ENCODE measurements at regions of chr1 and their contacts with region 1.

Region 1: DNA sequence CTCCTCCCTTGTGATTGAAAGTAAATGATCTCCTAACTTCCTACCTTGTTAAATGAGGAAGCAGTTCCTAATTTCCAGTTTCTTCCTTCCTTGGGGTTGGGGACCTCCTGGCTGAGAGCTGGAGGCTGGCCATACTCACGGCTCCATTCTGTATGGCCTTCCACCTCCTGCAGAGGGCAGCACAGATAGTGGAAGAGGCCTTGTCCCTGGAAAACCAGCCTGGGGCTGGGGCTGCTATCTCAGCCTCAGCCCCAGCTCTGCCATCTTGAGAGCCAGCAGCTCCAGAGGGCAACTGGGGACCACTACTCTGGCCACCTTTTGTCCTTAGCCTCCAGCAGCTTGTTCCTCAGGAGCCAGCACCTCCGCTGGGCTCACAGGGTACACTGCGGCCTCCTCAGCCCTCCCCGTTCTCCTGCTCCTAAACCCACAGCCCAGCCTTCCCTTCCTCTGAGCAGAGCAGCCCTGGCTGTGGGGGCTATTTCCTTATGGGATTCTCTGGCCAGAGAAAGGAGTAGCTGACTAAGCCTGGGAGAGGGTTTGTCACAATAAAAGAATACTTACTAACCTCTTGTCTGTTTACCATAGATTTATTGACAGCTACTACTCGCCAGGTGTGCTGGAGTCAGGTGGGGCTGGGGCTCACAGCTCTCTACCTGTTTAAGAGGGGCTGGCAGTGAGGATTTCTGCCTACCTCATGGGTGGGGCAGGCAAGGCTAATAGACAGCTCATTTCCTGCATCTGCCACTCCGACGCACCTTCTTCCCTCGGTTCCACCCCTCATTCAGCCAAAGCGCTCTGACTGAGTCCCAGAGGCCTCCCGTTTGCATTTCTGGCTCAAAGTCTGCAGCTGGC is 6.3 kb downstream of the TMEM234 start:
- DNase-seq: peak; percentile 60
- H3K4me3 ChIP-seq: no peak overlapping the region
- H3K27ac ChIP-seq: no peak overlapping the region
- H3K4me1 ChIP-seq: peaks cover 3% of the 10 kb centered on the region
- H3K27me3 ChIP-seq: no peaks in the 10 kb centered on the region
- CTCF ChIP-seq: peak; percentile 84 to 89
- POLR2A ChIP-seq: no peak

Region 2: DNA sequence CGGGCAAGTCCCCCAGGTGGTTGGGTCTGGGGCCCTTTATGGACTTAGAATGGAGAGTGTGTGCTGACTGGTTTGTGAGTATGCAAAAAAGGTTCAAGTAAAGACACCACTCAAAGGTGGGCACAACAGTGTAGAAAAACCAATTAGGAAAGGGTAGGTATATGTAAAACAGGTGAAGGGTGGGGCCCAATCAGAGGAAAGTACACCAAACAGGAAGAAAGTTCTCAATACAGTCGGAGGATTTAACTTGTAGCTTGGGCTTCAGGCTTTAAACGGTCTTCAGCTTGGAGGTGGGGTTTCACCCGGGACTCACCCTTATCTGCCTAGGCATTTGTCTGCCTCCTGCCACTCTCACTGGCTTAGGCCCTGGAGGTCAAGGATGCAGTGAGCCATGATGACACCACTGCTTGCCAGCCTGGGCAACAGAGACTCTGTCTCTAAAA is 1143.5 kb before region 1 on chr1:
- CTCF ChIA-PET with region 1: no interaction called
- POLR2A ChIA-PET with region 1: no interaction called
- dilution Hi-C with region 1: no loop called
- intact Hi-C with region 1: no loop called
- DNase-seq: no peak
- H3K4me3 ChIP-seq: no peak overlapping the region
- H3K27ac ChIP-seq: no peak overlapping the region
- H3K4me1 ChIP-seq: no peaks in the 10 kb centered on the region
- H3K27me3 ChIP-seq: no peaks in the 10 kb centered on the region
- CTCF ChIP-seq: no peak
- POLR2A ChIP-seq: no peak

Region 3: DNA sequence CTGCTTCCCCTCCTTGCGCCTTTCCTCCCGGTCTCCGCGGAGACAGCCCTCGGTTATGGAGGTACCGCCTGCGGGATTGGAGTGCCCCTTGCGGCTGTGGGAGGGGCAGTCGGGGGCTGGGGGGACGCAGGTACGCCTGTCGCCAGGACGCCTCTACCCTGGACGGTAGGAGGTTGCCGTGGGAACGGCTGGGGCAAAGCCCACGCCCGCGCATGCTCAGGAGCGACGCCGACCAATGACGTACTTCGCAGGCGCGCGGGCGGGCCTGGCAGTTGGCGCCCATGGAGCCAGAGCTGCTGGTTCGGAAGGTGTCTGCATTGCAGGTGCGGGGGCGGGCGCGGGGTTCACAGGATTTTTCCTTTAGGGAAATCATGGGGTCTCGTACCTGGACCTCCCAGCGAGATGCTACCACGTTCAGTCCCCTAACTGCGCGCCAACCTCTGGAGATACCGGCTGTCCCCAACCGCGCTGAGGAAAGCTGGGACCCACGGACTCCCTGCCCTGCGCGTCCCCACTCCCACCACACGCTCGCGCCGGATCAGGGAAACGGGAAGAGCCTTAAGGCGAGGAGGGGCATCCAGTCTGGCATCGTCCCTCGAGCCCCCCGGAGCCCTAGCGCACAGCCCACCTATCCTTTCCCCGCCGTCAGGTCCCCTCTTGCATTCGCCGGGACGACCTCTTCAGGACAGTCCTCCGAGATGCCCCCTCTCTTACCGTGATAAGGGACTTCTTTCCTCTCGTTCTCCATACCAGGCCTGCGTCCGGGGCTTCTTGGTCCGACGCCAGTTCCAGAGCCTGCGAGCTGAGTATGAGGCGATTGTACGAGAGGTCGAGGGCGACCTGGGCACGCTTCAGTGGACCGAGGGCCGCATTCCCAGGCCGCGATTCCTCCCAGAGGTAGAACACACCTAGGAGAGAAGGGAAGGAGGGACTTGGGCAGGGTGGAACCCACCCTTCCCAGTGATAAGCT is 10.2 kb before region 1 on chr1 and contains the start of gene IQCC:
- CTCF ChIA-PET with region 1: interaction called, 25 read pairs
- POLR2A ChIA-PET with region 1: no interaction called
- dilution Hi-C with region 1: no loop called
- intact Hi-C with region 1: no loop called
- DNase-seq: peak; percentile 82
- H3K4me3 ChIP-seq: peak within 1 kb of the TSS; percentile 53 to 68 (median 68)
- H3K27ac ChIP-seq: peak within 1 kb of the TSS; percentile 19
- H3K4me1 ChIP-seq: peaks cover 27% of the 10 kb centered on the region
- H3K27me3 ChIP-seq: no peaks in the 10 kb centered on the region
- CTCF ChIP-seq: no peak
- POLR2A ChIP-seq: peak; percentile 86
- total RNA-seq, gene IQCC: 1.8 and 2.2 TPM in 2 replicates

Region 4: GRCh38 chr1:32240140-32240951 is 24.5 kb after region 1 on chr1:
- CTCF ChIA-PET with region 1: interaction called, 30 read pairs
- POLR2A ChIA-PET with region 1: no interaction called
- dilution Hi-C with region 1: no loop called
- intact Hi-C with region 1: no loop called
- DNase-seq: peak; percentile 35
- H3K4me3 ChIP-seq: peak overlapping the region; percentile 50 to 81 (median 76)
- H3K27ac ChIP-seq: peak overlapping the region; percentile 70
- H3K4me1 ChIP-seq: peaks cover 32% of the 10 kb centered on the region
- H3K27me3 ChIP-seq: no peaks in the 10 kb centered on the region
- CTCF ChIP-seq: peak in 1 of 2 donors; percentile 36
- POLR2A ChIP-seq: peak; percentile 58

Region 5: DNA sequence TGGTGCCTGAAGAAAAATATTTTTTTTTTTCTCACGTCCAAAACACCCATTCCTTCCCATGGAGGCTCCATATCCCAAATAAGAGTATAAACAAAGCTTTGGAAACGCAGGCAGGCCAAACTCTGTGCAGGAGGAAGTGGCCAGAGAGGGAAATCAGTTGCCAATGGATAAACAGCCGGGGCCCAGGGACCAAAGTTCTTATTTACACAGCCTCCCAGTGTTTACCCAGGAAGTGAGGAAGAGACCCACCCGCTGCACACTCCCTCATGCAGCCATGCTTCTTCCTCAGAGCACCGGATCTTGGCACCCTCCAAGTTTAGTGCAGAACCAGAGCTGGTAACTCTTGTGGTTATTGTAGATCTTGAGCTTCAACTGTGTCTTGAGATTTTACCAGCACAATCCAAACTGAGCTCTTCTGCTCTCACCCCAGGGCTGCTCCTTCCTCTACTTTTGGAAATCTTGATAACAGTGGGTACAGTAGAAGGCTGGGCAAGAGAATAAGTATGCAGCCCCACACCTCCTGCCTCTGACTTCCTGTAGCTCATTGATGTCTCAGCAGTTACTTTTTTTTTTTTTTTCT is 105.9 kb after region 1 on chr1:
- CTCF ChIA-PET with region 1: interaction called, 78 read pairs
- POLR2A ChIA-PET with region 1: no interaction called
- dilution Hi-C with region 1: no loop called
- intact Hi-C with region 1: no loop called
- DNase-seq: no peak
- H3K4me3 ChIP-seq: no peak overlapping the region
- H3K27ac ChIP-seq: no peak overlapping the region
- H3K4me1 ChIP-seq: peaks cover 6% of the 10 kb centered on the region
- H3K27me3 ChIP-seq: no peaks in the 10 kb centered on the region
- CTCF ChIP-seq: no peak
- POLR2A ChIP-seq: no peak

Region 6: GRCh38 chr1:32361674-32362473 is 146.0 kb after region 1 on chr1:
- CTCF ChIA-PET with region 1: interaction called, 16 read pairs
- POLR2A ChIA-PET with region 1: no interaction called
- dilution Hi-C with region 1: no loop called
- intact Hi-C with region 1: loop called (anchors 5 kb)
- DNase-seq: peak; percentile 41
- H3K4me3 ChIP-seq: peak overlapping the region in 2 of 3 experiments; percentile 14 to 31
- H3K27ac ChIP-seq: no peak overlapping the region
- H3K4me1 ChIP-seq: peaks cover 7% of the 10 kb centered on the region
- H3K27me3 ChIP-seq: no peaks in the 10 kb centered on the region
- CTCF ChIP-seq: peak; percentile 39 to 61
- POLR2A ChIP-seq: peak; percentile 60

Region 7: DNA sequence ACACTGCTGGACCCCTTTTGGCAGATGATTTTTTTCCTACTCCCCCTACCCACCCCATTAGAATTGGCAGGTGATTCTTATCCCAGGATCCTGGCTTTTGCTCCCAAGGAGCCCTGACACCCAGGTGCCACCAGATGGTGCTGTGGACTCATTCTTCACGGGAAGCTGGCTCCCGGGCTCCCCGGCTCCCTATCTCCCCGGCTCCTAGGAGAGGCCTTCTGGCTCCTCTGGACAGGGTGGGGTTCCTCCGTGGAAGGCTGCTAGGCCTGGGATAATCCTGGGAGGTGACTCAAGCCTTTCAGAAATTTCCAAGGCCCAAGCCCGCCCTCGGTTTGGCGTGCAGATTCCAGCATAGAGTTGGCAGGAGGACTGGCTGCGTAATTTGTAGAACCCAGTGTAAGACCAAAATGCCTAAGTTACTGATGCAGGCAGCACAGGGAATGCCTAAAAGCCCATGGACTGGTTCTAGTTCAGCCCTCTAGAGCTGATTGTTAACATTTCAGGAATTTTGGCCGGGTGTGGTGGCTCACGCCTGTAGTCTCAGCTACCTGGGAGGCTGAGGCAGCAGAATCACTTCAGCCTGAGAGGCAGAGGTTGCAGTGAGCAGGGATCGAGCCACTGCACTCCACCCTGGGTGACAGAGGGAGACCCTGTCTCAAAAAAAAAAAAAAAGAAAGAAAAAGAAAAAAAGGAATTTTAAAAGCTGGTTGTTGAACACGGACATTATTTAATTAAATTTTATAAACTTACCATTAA is 185.2 kb after region 1 on chr1:
- CTCF ChIA-PET with region 1: interaction called, 13 read pairs
- POLR2A ChIA-PET with region 1: no interaction called
- dilution Hi-C with region 1: no loop called
- intact Hi-C with region 1: no loop called
- DNase-seq: peak; percentile 65
- H3K4me3 ChIP-seq: no peak overlapping the region
- H3K27ac ChIP-seq: no peak overlapping the region
- H3K4me1 ChIP-seq: no peaks in the 10 kb centered on the region
- H3K27me3 ChIP-seq: no peaks in the 10 kb centered on the region
- CTCF ChIP-seq: peak; percentile 88 to 90
- POLR2A ChIP-seq: no peak

Measured in endothelial cell of umbilical vein (primary cell).